Common myeloid progenitor, CD34-positive (primary cell): ENCODE measurements at regions of chr1 and their contacts with region 1.

Region 1: DNA sequence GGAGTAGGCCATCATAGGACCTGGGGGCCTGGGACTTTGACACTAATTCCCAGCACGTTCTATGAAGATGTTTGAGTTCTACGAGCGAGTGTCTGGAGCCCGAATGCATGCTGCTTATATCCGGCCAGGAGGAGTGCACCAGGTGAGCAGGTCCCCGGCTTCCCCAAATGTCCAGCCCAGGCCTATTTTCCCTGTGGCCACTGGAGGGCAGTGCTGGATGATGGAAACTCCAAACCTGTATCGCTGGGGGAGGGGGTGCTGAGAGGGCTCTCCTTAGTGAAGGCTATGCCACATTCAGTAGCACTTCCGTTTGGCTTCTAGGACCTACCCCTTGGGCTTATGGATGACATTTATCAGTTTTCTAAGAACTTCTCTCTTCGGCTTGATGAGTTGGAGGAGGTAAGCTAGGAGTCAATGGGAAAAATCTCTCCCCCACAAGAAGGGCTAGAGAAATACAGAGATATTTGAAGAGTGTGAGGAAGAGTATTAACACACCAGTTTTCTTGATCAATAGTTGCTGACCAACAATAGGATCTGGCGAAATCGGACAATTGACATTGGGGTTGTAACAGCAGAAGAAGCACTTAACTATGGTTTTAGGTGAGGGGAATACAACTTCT is 5.2 kb upstream of the FCER1G start:
- DNase-seq: peak; percentile 82 to 89 (median 84)
- H3K4me3 ChIP-seq: no peak overlapping the region
- H3K27ac ChIP-seq: no peak overlapping the region
- H3K4me1 ChIP-seq: peaks cover 2 to 24% (median 8%) of the 10 kb centered on the region in 4 experiments
- H3K27me3 ChIP-seq: no peaks in the 10 kb centered on the region

Region 2: GRCh38 chr1:161238039-161238473 is 28.2 kb after region 1 on chr1 and contains the start of gene NR1I3:
- CTCF ChIA-PET with region 1: interaction called, 10 read pairs
- POLR2A ChIA-PET with region 1: no interaction called
- DNase-seq: no peak
- H3K4me3 ChIP-seq: no peak within 1 kb of the TSS
- H3K27ac ChIP-seq: no peak within 1 kb of the TSS
- H3K4me1 ChIP-seq: peaks cover 2 to 15% (median 5%) of the 10 kb centered on the region in 4 experiments
- H3K27me3 ChIP-seq: peaks cover 0 to 2% (median 0%) of the 10 kb centered on the region in 5 experiments

Region 3: GRCh38 chr1:161292631-161293030 is 82.7 kb after region 1 on chr1:
- CTCF ChIA-PET with region 1: interaction called, 10 read pairs
- POLR2A ChIA-PET with region 1: no interaction called
- DNase-seq: no peak
- H3K4me3 ChIP-seq: no peak overlapping the region
- H3K27ac ChIP-seq: no peak overlapping the region
- H3K4me1 ChIP-seq: peaks cover 0 to 7% (median under 1%) of the 10 kb centered on the region in 4 experiments
- H3K27me3 ChIP-seq: no peaks in the 10 kb centered on the region

Region 4: GRCh38 chr1:161298116-161298515 is 88.2 kb after region 1 on chr1:
- CTCF ChIA-PET with region 1: interaction called, 10 read pairs
- POLR2A ChIA-PET with region 1: no interaction called
- DNase-seq: peak in 2 of 3 donors; percentile 28 to 37
- H3K4me3 ChIP-seq: no peak overlapping the region
- H3K27ac ChIP-seq: no peak overlapping the region
- H3K4me1 ChIP-seq: peaks cover 0 to 11% (median 4%) of the 10 kb centered on the region in 4 experiments
- H3K27me3 ChIP-seq: no peaks in the 10 kb centered on the region

Region 5: DNA sequence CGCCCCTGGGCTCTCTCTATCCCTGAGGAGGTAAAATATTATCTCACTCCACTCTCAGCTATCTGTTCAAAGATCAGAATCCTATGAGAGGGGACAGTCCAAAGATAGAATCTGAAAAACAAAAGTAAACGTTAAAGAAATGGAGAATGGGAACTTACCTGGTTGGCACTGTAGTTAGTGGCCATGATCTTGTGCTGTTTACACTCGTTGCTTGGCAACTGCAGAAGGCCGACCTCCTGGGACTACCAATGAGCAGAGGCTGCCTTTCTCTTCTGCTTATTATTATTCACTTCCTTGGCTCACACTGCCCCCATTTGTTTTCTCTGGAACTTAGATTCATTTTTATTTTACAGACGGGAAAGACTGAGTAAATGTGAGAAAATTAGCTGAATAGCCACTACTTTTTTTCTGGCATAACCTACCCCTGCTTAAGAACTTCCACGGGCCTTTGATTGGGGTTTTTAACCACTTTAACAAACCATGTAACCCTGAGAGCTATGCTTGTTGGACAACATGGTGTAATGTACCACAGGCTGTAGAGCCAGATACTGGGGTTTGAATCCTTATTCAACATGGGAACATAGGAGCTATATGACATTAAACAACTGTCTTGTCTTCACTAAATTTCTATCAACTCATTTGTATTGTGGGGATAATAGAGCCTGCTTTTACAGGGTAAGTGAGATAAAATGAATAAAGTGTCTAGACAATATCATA is 157.9 kb after region 1 on chr1 and contains the start of gene CFAP126:
- CTCF ChIA-PET with region 1: interaction called, 10 read pairs
- POLR2A ChIA-PET with region 1: no interaction called
- DNase-seq: peak; percentile 92 to 95 (median 94)
- H3K4me3 ChIP-seq: peak within 1 kb of the TSS in 3 of 7 experiments; percentile 23 to 51 (median 41)
- H3K27ac ChIP-seq: peak within 1 kb of the TSS; percentile 81 to 94
- H3K4me1 ChIP-seq: peaks cover 0 to 8% (median 2%) of the 10 kb centered on the region in 4 experiments
- H3K27me3 ChIP-seq: no peaks in the 10 kb centered on the region

Region 6: DNA sequence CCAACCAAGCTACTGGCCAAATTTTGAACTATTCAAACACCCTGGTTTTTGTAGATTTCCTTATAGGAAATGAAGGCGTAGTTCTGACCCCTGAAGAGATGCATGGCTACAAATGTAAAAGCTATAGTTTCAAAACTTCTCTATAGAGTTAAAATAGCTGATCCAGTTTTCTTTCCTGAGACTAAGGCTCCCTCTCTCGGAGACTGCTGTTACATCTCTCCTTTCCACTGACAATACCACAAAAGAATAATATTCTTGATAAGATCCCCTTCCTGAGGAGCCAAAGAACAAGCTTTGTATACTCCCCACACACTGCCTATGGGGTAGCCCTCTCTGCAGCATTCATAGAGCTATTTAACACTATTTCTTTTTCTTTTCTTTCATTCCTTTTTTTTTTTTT is 164.5 kb after region 1 on chr1:
- CTCF ChIA-PET with region 1: interaction called, 111 read pairs
- POLR2A ChIA-PET with region 1: no interaction called
- DNase-seq: peak; percentile 33 to 51 (median 49)
- H3K4me3 ChIP-seq: no peak overlapping the region
- H3K27ac ChIP-seq: no peak overlapping the region
- H3K4me1 ChIP-seq: peaks cover 0 to 4% (median 0%) of the 10 kb centered on the region in 4 experiments
- H3K27me3 ChIP-seq: no peaks in the 10 kb centered on the region